ENCODE measurements at regions of chr9 and their contacts with region 1.

Region 1: GRCh38 chr9:35071814-35072460 is 488 bp downstream of the VCP start:
- DNase-seq: peak; percentile 51 to 93
- H3K4me3 ChIP-seq: peak overlapping the region; percentile 79 to 91
- H3K27ac ChIP-seq: peak overlapping the region; percentile 100
- H3K4me1 ChIP-seq: peaks cover 17 to 36% of the 10 kb centered on the region in 2 donors
- H3K27me3 ChIP-seq: no peaks in the 10 kb centered on the region
- CTCF ChIP-seq: peak; percentile 25 to 52 (median 37)

Region 2: GRCh38 chr9:34651876-34652601 is 419.9 kb before region 1 on chr9 and contains the start of gene IL11RA:
- intact Hi-C with region 1: loop called (anchors 10 kb)
- DNase-seq: peak; percentile 53 to 94
- H3K4me3 ChIP-seq: peak within 1 kb of the TSS; percentile 42 to 65
- H3K27ac ChIP-seq: peak within 1 kb of the TSS; percentile 89 to 96
- H3K4me1 ChIP-seq: peaks cover 33 to 64% of the 10 kb centered on the region in 2 donors
- H3K27me3 ChIP-seq: no peaks in the 10 kb centered on the region
- CTCF ChIP-seq: peak in 1 of 3 experiments; percentile 4
- total RNA-seq, gene IL11RA: 50.3 TPM

Region 3: GRCh38 chr9:34989003-34989945 is 82.7 kb before region 1 on chr9 and contains the start of gene DNAJB5:
- intact Hi-C with region 1: loop called (anchors 1 kb)
- DNase-seq: peak; percentile 99 to 100
- H3K4me3 ChIP-seq: peak within 1 kb of the TSS; percentile 81 to 100
- H3K27ac ChIP-seq: peak within 1 kb of the TSS; percentile 98 to 100
- H3K4me1 ChIP-seq: peaks cover 13 to 39% of the 10 kb centered on the region in 2 donors
- H3K27me3 ChIP-seq: no peaks in the 10 kb centered on the region
- CTCF ChIP-seq: no peak
- total RNA-seq, gene DNAJB5: 40.8 TPM

Region 4: DNA sequence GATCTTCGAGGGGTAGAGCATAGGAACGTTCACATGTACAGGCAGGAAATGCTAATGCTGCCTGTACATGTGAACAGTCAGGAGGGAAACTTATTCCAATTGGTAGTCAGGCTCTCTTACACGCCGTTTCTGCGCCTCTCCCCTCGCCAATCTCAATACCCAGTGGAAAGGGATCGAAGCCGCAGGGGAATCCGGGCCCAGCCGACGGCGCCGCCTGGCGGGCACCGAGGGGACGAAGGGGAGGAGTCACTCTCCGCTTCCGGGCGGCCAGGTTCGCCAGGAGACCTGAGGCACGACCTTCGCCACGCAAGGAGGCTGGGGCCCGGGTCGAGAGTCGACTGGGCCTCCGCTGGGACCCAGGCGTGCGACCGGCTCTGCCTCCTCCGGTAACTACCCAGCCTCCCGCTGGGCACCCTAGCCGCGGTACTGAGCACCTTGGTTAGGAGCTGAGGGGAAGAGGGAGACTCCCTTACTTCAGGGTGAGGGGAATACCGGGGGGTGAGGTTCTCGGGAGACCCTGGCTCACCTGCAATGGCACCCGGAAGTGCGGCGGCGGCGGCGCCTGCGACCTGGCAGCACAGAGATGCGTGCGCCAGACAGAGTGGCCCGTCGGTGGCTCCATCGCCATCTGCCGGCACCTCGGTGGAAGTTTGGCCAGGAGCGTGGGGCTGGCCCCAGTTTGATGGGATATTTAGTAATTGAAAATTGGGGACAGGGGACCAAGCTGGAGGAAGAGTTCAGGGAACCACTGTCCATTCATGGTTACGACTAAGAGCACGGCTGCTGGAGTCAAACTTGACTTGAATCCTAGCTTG is 24.3 kb after region 1 on chr9 and contains the start of gene PIGO:
- intact Hi-C with region 1: loop called (anchors 1 kb)
- DNase-seq: peak in 1 of 2 donors; percentile 94
- H3K4me3 ChIP-seq: peak within 1 kb of the TSS; percentile 82 to 87
- H3K27ac ChIP-seq: peak within 1 kb of the TSS; percentile 96 to 99
- H3K4me1 ChIP-seq: peaks cover 0 to 10% of the 10 kb centered on the region in 2 donors
- H3K27me3 ChIP-seq: no peaks in the 10 kb centered on the region
- CTCF ChIP-seq: peak; percentile 71 to 79 (median 76)
- total RNA-seq, gene PIGO: 2.4 TPM

Region 5: GRCh38 chr9:35111001-35111933 is 39.3 kb after region 1 on chr9:
- intact Hi-C with region 1: loop called (anchors 1 kb)
- DNase-seq: peak; percentile 95 to 99
- H3K4me3 ChIP-seq: peak overlapping the region; percentile 87 to 92
- H3K27ac ChIP-seq: peak overlapping the region; percentile 98 to 99
- H3K4me1 ChIP-seq: peaks cover 16 to 39% of the 10 kb centered on the region in 2 donors
- H3K27me3 ChIP-seq: no peaks in the 10 kb centered on the region
- CTCF ChIP-seq: no peak

Measured in ascending aorta (tissue), 2 donors.